B cell (primary cell): ENCODE measurements at regions of chr11 and their contacts with region 1.

Region 1: DNA sequence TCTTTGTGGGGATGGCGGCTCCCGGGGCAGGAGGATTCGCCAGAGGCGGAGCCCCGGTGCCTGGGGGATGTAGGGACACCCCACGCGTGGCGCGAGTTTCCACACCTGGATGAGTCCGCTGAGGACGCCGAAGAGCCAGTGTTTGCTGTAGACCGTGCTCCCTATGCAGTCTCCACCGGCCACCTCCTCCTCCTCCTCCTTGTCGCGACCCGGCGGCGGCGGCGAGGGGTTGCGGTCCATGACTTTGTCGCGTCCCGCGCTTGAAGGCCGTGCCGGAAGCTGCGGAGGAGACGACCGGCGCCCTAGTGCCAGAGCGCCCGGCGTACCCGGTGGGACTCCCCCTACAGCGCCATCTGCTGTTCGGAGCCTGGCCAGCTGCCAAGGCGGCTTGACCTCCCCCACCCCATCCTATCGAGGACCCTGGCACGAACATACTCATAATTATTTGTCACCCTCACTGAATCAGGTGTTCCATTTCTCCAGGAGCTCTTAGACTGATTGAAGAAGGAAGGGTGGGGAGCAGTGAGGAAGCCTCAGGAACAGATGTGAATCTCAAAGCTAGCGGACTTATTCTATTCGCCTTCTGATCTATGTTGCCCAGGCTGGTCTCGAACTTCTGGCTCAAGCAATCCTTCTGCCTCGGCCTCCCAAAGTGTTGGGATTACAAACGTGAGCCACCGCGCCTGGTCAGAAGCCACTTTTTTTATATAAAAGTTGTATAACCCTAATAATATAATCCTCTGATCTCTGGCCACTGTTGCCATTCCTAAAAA is at the start of gene SAAL1:
- DNase-seq: peak; percentile 91
- ATAC-seq: peak; percentile 98
- H3K4me3 ChIP-seq: peak within 1 kb of the TSS; percentile 70 to 99 (median 82)
- H3K4me3 Mint-ChIP-seq: peak within 1 kb of the TSS; percentile 95
- H3K27ac ChIP-seq: peak within 1 kb of the TSS; percentile 65 to 91
- H3K27ac Mint-ChIP-seq: peak within 1 kb of the TSS; percentile 90
- H3K4me1 ChIP-seq: peaks cover 15 to 17% of the 10 kb centered on the region in 2 donors
- H3K4me1 Mint-ChIP-seq: peaks cover 28% of the 10 kb centered on the region
- H3K27me3 ChIP-seq: peaks cover 0 to 4% (median 1%) of the 10 kb centered on the region in 4 experiments
- H3K27me3 Mint-ChIP-seq: peaks cover 19% of the 10 kb centered on the region
- CTCF ChIP-seq: peak; percentile 89
- total RNA-seq, gene SAAL1: 35.2 and 37.8 TPM in 2 replicates

Region 2: DNA sequence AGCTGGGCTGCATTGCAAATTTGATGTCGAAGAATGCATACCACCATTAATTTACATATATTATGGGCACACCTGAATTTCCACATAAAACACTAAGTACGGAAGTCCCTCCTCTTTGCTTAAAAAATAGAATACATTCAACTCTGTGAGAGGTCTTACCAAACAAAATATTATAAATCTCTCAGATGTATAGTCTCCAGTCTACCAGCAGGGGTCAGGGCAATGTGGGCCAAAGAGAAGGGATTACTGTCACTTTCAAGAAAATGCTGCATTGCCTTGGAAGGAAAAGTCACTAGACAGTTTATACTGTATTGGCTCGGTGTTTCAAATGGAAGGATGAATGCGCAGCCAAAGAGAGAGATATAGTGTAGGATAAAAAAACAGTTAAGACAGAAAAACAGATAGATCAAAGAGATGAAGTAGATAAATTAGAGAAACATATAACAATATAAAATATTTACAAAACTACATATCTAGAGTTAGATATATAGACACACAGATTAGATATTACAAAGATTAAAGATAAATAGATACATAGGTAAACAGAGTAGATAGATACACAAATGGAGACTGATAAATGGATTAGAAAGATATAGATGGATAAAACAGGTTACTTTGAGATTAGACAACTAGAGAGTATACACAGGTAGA is 114.1 kb before region 1 on chr11:
- CTCF ChIA-PET with region 1: interaction called, 11 read pairs
- POLR2A ChIA-PET with region 1: no interaction called
- intact Hi-C with region 1: loop called (anchors 1 kb)
- DNase-seq: peak; percentile 52
- ATAC-seq: peak; percentile 70
- H3K4me3 ChIP-seq: no peak overlapping the region
- H3K4me3 Mint-ChIP-seq: no peak overlapping the region
- H3K27ac ChIP-seq: no peak overlapping the region
- H3K27ac Mint-ChIP-seq: no peak overlapping the region
- H3K4me1 ChIP-seq: no peaks in the 10 kb centered on the region
- H3K4me1 Mint-ChIP-seq: no peaks in the 10 kb centered on the region
- H3K27me3 ChIP-seq: no peaks in the 10 kb centered on the region
- H3K27me3 Mint-ChIP-seq: no peaks in the 10 kb centered on the region
- CTCF ChIP-seq: peak; percentile 98